Activated T-helper 2 cell treated with anti-CD3 and anti-CD28 coated beads, Interferon-gamma antibody, Interleukin-2, Interleukin-4, amounts not matched to agents 10 μg/mL and 5 μg/mL and 100 μg/mL, durations not matched to agents 14 hours and 24 hours and 36 hours (primary cell): ENCODE measurements at regions of chr11 and their contacts with region 1.

Region 1: DNA sequence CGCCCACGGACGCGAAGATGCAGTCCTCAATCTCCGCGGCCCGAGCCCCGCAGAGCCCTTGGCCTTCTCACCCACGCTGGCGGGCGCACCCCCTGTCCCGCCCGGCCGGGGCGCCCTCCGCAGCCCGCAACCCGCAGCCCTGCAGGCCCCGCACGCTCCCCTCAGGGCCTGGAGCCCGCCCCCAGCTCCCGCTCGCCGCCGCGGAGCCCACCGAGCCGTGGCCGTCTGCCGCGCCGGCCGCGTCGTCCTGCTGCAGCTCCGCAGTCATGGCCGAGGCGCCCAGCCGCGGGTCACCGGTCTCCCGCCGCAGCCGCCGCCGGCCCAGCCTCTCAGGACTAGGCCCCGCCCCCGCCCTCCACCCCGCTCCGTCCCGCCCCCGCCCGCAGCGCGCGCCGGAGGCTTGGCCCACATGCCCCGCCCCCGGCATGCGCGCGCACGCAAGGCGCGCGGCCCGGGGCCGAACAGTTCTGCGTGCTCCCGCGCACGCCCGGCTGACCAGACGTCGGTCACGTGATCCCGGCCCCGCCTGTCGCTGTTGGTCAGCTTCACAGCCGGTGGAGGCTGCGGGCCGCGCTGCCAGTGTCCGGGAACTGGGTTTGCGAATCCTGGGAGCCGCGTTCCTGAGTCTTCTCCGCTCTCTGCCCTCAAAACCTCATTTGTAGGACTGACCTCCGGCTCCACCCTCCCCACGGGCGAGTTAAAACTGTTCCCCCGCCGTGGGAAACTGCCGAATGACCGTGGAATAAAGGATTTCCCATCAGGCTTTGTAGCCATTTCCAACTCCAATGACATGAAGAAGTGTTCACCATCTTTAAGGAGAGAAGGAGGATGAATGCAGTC is at the start of gene USP28:
- DNase-seq: peak; percentile 77
- H3K4me3 Mint-ChIP-seq: peak within 1 kb of the TSS; percentile 98
- H3K27ac Mint-ChIP-seq: peak within 1 kb of the TSS; percentile 98
- H3K4me1 Mint-ChIP-seq: peaks cover 46% of the 10 kb centered on the region
- H3K27me3 Mint-ChIP-seq: no peaks in the 10 kb centered on the region
- total RNA-seq, gene USP28: 34.8 and 38.4 TPM in 2 replicates

Region 2: DNA sequence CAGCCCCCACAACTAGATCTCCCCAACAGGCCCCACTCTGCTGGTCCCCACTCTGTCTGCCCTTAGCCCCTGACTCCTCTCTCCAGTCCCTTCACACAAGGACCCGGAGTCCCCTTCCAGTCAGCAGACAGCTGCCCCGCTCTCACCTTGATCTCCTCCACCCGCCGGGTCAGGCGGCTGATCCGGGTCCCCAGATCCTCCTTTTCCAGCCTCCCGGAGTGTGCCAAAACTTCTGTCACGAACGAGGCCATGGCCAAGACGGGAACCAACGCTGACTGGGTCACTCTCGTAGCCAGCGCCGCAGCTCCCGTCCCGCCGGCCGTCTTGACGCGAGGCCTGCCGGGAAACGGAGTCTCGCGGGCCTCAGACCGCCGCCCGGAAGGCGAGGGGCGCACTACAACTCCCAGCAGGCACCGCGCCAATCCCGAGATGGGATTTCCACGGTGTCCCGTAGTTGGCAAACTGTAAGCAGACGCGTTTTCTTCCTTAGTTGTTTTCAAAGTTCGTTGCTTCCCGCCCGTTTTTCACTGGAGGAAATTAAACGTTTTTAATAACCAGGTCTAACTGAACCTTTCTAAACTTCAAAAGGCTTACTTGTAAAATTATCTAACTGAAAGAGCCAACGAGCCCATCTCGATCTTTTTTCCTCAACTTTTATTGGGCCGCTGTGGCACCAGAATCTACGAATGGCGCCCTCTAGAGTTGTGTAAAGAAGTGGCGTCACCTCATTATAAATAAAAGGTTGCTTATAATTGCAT is 101.9 kb before region 1 on chr11 and contains the start of gene ZW10:
- intact Hi-C with region 1: loop called (anchors 2 kb)
- DNase-seq: peak; percentile 90
- H3K4me3 Mint-ChIP-seq: peak within 1 kb of the TSS; percentile 98
- H3K27ac Mint-ChIP-seq: peak within 1 kb of the TSS; percentile 98
- H3K4me1 Mint-ChIP-seq: peaks cover 22% of the 10 kb centered on the region
- H3K27me3 Mint-ChIP-seq: peaks cover 12% of the 10 kb centered on the region
- total RNA-seq, gene ZW10: 24.4 TPM in 2 replicates

Region 3: GRCh38 chr11:113806406-113806805 is 69.0 kb before region 1 on chr11:
- intact Hi-C with region 1: loop called (anchors 2 kb)
- DNase-seq: no peak
- H3K4me3 Mint-ChIP-seq: no peak overlapping the region
- H3K27ac Mint-ChIP-seq: no peak overlapping the region
- H3K4me1 Mint-ChIP-seq: no peaks in the 10 kb centered on the region
- H3K27me3 Mint-ChIP-seq: no peaks in the 10 kb centered on the region